Endothelial cell of umbilical vein (primary cell): ENCODE measurements at regions of chr5 and their contacts with region 1.

Region 1: GRCh38 chr5:146041180-146041789 is 64.1 kb downstream of the PLAC8L1 start:
- DNase-seq: no peak
- H3K4me3 ChIP-seq: no peak overlapping the region
- H3K27ac ChIP-seq: no peak overlapping the region
- H3K4me1 ChIP-seq: peaks cover 9% of the 10 kb centered on the region
- H3K27me3 ChIP-seq: no peaks in the 10 kb centered on the region
- CTCF ChIP-seq: peak; percentile 12 to 23
- POLR2A ChIP-seq: no peak

Region 2: GRCh38 chr5:145908205-145908945 is 132.9 kb before region 1 on chr5:
- CTCF ChIA-PET with region 1: interaction called, 14 read pairs
- POLR2A ChIA-PET with region 1: no interaction called
- dilution Hi-C with region 1: no loop called
- intact Hi-C with region 1: no loop called
- DNase-seq: no peak
- H3K4me3 ChIP-seq: no peak overlapping the region
- H3K27ac ChIP-seq: no peak overlapping the region
- H3K4me1 ChIP-seq: no peaks in the 10 kb centered on the region
- H3K27me3 ChIP-seq: no peaks in the 10 kb centered on the region
- CTCF ChIP-seq: peak in 1 of 2 donors; percentile 3
- POLR2A ChIP-seq: no peak

Region 3: DNA sequence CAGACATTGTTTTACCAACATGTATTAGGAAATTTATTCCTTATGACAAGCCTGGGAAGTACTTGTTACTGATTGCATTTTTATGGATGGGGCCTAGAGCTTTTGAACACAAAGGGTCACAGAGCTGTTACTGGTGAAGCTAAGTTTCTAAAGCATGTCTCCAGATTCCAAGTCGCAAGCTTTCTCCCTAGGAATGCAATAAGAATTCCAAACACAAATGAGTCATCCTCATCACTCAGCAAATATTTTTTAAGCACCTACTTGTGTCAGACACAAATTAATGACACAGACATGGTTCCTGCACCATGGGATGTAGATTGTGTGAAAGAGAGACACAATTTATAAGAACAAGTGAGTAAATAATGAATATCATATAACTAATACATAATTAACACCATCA is 115.9 kb before region 1 on chr5:
- CTCF ChIA-PET with region 1: no interaction called
- POLR2A ChIA-PET with region 1: no interaction called
- dilution Hi-C with region 1: no loop called
- intact Hi-C with region 1: no loop called
- DNase-seq: peak; percentile 80
- H3K4me3 ChIP-seq: no peak overlapping the region
- H3K27ac ChIP-seq: peak overlapping the region; percentile 37
- H3K4me1 ChIP-seq: peaks cover 19% of the 10 kb centered on the region
- H3K27me3 ChIP-seq: no peaks in the 10 kb centered on the region
- CTCF ChIP-seq: no peak
- POLR2A ChIP-seq: no peak

Region 4: DNA sequence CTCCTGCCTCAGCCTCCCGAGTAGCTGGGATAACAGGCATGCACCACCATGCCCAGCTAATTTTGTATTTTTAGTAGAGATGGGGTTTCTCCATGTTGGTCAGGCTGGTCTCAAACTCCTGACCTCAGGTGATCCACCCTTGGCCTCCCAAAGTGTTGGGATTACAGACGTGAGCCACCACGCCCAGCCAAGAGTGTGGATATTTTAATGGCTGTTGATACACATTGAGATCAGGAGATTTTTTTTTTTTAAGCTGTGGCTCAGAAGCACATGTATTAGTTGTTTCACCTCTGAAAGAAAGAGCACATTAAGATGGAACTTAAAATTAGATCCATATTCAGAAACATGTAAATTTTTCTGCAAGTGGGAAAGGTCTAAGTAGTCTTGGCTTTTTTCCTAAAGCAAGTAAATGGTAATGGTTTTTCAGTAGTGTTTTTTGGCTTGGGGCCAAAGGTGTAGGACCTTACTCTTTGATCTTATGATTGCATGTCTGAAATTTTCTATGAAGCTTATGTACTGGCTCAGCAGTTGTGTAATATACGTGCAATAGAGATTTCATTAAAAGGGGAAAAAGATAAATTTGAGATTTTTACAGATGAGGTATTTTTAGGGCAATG is 172.0 kb after region 1 on chr5:
- CTCF ChIA-PET with region 1: no interaction called
- POLR2A ChIA-PET with region 1: no interaction called
- dilution Hi-C with region 1: no loop called
- intact Hi-C with region 1: no loop called
- DNase-seq: peak; percentile 50
- H3K4me3 ChIP-seq: no peak overlapping the region
- H3K27ac ChIP-seq: no peak overlapping the region
- H3K4me1 ChIP-seq: no peaks in the 10 kb centered on the region
- H3K27me3 ChIP-seq: no peaks in the 10 kb centered on the region
- CTCF ChIP-seq: no peak
- POLR2A ChIP-seq: no peak